ENCODE measurements at regions of chr1 and their contacts with region 1.

Region 1: GRCh38 chr1:230994860-230995259 is 16.0 kb downstream of the ARV1 start:
- DNase-seq: no peak
- H3K4me3 ChIP-seq: no peak overlapping the region
- CTCF ChIP-seq: no peak

Region 2: DNA sequence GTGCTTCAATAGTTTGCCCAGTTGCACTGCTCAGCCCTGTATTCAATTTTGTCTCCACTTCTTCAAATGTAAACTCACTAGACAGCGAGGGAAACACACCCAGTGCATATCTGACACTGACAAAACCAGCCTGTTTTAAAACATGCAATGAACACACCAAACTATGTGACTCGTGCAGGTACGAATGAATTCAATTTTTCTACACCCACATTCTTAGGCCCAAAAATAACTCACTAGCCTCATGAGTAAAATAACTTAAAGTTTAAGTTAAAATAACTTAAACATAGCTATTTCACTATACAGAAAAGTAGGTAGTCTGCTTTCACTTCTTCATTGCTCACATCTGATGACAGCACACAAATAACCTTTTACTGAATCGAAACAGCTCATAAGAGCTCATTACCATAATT is 37.3 kb before region 1 on chr1:
- in situ Hi-C with region 1: loop called (anchors 5 kb)
- DNase-seq: no peak
- H3K4me3 ChIP-seq: no peak overlapping the region
- CTCF ChIP-seq: no peak